ENCODE measurements at regions of chr6 and their contacts with region 1.

Region 1: GRCh38 chr6:31139599-31139998 is 733 bp upstream of the PSORS1C2 start:
- DNase-seq: no peak
- ATAC-seq: no peak

Region 2: GRCh38 chr6:31186052-31186734 is 46.6 kb after region 1 on chr6:
- intact Hi-C with region 1: no loop called
- DNase-seq: peak; percentile 88
- ATAC-seq: peak; percentile 49 to 83

Region 3: DNA sequence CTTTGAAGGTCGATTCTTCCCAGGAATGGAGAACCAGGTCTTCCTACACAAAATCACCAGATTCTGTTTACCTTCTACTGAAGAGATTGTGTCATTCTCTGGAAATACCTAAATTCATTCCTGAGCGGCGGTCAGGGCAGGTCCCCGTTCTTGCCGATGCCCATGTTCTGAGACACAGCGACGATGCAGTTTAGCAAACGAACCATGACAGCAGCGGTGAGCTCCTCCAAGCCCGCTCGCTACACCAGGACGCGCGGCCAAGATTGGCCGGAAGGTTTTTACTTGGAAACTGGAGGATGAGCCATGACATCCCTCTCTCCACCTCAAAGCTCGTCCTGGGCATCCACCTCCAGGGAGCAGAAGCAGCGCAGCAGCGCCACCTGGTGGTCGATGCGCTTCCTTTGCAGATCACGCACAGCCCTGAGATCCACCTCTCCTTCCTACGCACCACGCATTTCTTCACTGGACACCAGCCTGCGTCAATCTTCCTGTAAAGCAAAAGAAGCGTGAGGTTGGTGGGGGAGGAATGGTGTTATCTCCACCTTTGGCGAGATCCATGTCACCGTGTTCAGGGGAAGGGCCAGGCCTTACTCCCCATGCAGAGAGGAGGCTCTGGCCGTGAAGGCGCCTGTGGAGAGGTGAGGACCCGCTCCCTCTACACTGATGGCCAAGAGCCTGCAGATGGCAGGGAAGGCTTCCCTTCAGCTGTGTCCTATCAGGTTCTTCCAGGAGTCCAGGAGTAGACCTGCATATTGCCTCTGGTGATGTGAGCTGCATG is 227.3 kb after region 1 on chr6:
- intact Hi-C with region 1: loop called (anchors 5 kb)
- DNase-seq: peak; percentile 88
- ATAC-seq: peak; percentile 100

Measured in left cardiac atrium (tissue), 4 donors.